ENCODE measurements at regions of chr7 and their contacts with region 1.

Region 1: DNA sequence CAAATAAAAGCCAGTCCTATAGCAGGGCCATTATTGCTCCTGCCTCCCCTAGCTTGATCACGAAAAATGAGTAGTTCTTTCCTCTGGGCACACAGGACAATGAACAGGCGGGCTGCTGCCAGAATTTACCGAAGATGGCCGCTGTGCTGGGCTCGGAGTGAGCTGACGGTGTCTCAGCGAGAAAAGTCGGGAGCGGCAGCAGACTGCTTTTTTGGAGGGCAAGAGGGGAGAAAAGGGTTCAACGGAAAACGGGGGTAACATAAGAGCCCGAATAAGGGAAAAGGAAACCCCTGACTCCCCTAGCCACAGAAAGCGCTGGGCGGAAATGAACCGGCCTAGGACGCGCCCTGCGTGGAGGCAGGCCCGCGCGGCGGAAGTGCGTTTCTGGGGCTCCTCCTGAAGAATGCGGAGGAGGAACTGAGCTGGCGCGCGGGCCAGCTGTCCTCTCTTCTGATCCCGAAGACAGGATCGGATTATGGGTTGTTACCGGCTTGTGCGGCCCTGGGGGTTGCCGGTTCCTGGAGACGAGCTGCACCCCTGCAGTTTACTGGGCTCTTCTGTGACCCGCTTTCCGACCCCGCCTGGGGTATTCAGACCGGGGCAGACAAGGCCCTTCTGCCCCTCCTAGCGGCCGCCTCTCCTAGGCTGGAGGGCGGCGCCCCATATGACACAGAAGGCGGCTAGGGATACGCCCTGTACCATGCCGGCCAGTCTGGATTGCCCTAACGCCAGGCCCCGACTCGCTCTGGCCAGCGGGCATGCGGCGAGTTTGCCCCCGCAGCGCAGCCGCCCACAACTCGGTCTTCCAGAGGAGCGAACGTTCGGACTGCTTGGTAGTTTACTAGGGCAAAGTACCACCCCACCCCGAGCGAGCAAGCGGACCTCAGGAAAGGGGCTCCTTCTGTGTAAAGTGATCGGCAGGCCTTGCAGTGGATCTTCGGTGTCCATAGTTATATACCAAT is 30.1 kb upstream of the KMT2E start:
- DNase-seq: peak; percentile 42
- ATAC-seq: peak; percentile 96
- H3K4me3 ChIP-seq: peak overlapping the region; percentile 75
- H3K27ac ChIP-seq: peak overlapping the region; percentile 98
- H3K4me1 ChIP-seq: peaks cover 14% of the 10 kb centered on the region; the same call in 1 of the 2 replicates
- H3K27me3 ChIP-seq: no peaks in the 10 kb centered on the region
- CTCF ChIP-seq: peak; percentile 36 to 61 (median 50); a peak in 5 of 6 replicates
- EP300 ChIP-seq: 0 out of 4 replicates have a peak, but pooled peaks of 1 of the 2 experiments have one; percentile 24
- POLR2A ChIP-seq: peak; percentile 90
- RAD21 ChIP-seq: peak; percentile 37; the same call in 1 of the 2 replicates

Region 2: DNA sequence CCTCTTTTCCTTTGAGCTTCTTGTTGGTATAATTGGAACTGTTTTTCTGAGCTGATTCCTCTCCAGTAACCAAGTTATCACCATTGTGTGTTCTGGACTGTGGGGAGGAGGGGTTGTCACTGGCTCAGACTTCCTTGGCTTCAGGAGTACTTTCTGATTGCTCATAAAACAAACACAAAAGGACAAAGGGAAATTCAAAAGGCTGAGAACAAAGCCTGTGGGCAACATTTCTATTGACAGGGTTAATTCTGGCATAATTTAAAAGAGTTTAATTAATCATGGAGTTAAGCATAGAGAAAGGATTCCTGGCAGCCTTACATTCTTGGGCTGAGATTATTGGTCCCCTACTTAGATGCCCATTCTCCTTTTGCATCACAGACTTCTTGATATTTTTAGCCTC is 192.8 kb before region 1 on chr7:
- CTCF ChIA-PET with region 1: no interaction called
- POLR2A ChIA-PET with region 1: no interaction called
- RAD21 ChIA-PET with region 1: no interaction called
- SMC1A ChIA-PET with region 1: no interaction called
- in situ Hi-C with region 1: no loop called
- intact Hi-C with region 1: no loop called
- DNase-seq: no peak
- ATAC-seq: no peak
- H3K4me3 ChIP-seq: no peak overlapping the region
- H3K27ac ChIP-seq: no peak overlapping the region
- H3K4me1 ChIP-seq: no peaks in the 10 kb centered on the region
- H3K27me3 ChIP-seq: no peaks in the 10 kb centered on the region; a peak in 2 of 4 replicates
- CTCF ChIP-seq: no peak
- EP300 ChIP-seq: no peak
- POLR2A ChIP-seq: no peak
- RAD21 ChIP-seq: no peak

Region 3: GRCh38 chr7:104923010-104923421 is 60.8 kb before region 1 on chr7:
- CTCF ChIA-PET with region 1: interaction called, 200 read pairs
- POLR2A ChIA-PET with region 1: interaction called, 5 read pairs
- RAD21 ChIA-PET with region 1: interaction called, 147 read pairs
- SMC1A ChIA-PET with region 1: interaction called, 104 read pairs
- in situ Hi-C with region 1: no loop called
- intact Hi-C with region 1: loop called (anchors 1 kb)
- DNase-seq: peak; percentile 71
- ATAC-seq: peak; percentile 99
- H3K4me3 ChIP-seq: no peak overlapping the region
- H3K27ac ChIP-seq: no peak overlapping the region
- H3K4me1 ChIP-seq: peaks cover 6% of the 10 kb centered on the region; the same call in 1 of the 2 replicates
- H3K27me3 ChIP-seq: no peaks in the 10 kb centered on the region
- CTCF ChIP-seq: peak; percentile 86 to 98 (median 89); a peak in 5 of 6 replicates
- EP300 ChIP-seq: no peak
- POLR2A ChIP-seq: no peak
- RAD21 ChIP-seq: peak; percentile 97

Region 4: GRCh38 chr7:104963991-104964385 is 19.9 kb before region 1 on chr7:
- CTCF ChIA-PET with region 1: interaction called, 21 read pairs
- POLR2A ChIA-PET with region 1: interaction called, 4 read pairs
- RAD21 ChIA-PET with region 1: interaction called, 11 read pairs
- SMC1A ChIA-PET with region 1: interaction called, 39 read pairs
- in situ Hi-C with region 1: no loop called
- intact Hi-C with region 1: no loop called
- DNase-seq: no peak
- ATAC-seq: no peak
- H3K4me3 ChIP-seq: no peak overlapping the region
- H3K27ac ChIP-seq: no peak overlapping the region
- H3K4me1 ChIP-seq: peaks cover 10% of the 10 kb centered on the region; the same call in 1 of the 2 replicates
- H3K27me3 ChIP-seq: no peaks in the 10 kb centered on the region
- CTCF ChIP-seq: no peak
- EP300 ChIP-seq: no peak
- POLR2A ChIP-seq: no peak
- RAD21 ChIP-seq: no peak

Region 5: GRCh38 chr7:105036217-105037168 is 52.6 kb after region 1 on chr7:
- CTCF ChIA-PET with region 1: interaction called, 97 read pairs
- POLR2A ChIA-PET with region 1: interaction called, 9 read pairs
- RAD21 ChIA-PET with region 1: interaction called, 42 read pairs
- SMC1A ChIA-PET with region 1: interaction called, 119 read pairs
- in situ Hi-C with region 1: no loop called
- intact Hi-C with region 1: loop called (anchors 1 kb)
- DNase-seq: no peak
- ATAC-seq: peak; percentile 48
- H3K4me3 ChIP-seq: no peak overlapping the region
- H3K27ac ChIP-seq: no peak overlapping the region
- H3K4me1 ChIP-seq: 0 out of 2 replicates have a peak, but pooled peaks cover 4% of the 10 kb centered on the region
- H3K27me3 ChIP-seq: no peaks in the 10 kb centered on the region
- CTCF ChIP-seq: no peak
- EP300 ChIP-seq: no peak
- POLR2A ChIP-seq: no peak
- RAD21 ChIP-seq: no peak

Region 6: DNA sequence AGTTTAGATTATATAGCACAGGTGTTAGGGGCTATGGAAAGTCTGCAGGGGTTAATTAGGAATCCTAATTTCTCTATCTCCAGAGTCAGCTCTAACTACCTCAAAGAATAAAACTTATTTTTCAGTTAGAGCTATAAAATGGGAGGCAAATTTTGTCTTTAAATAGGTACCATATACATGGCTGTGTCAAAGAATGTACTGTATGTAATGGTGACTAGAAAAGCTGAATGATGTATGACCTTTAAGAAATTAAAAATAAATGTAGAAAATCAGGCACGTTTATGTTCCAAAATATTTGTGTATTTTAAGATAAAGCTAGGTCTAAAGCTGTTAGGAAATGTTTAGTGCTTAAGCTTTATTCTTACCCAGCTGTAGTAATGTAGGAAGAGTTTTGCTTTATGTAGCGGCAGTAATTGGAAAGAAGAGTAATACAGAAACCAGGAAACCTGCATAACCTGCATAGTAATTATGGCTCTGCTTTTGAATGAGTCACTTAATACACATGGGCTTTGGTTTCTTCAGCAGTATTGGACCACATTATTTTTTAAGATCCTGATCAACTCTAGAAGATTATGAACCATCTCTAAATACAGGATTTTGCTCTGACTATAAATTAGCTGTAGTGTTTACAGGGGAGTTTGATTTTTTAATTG is 115.1 kb after region 1 on chr7:
- CTCF ChIA-PET with region 1: interaction called, 10 read pairs
- POLR2A ChIA-PET with region 1: interaction called, 3 read pairs
- RAD21 ChIA-PET with region 1: interaction called, 44 read pairs
- SMC1A ChIA-PET with region 1: interaction called, 13 read pairs
- in situ Hi-C with region 1: no loop called
- intact Hi-C with region 1: loop called (anchors 5 kb)
- DNase-seq: no peak
- ATAC-seq: peak; percentile 81
- H3K4me3 ChIP-seq: no peak overlapping the region
- H3K27ac ChIP-seq: no peak overlapping the region
- H3K4me1 ChIP-seq: peaks cover 26% of the 10 kb centered on the region; the same call in 1 of the 2 replicates
- H3K27me3 ChIP-seq: no peaks in the 10 kb centered on the region
- CTCF ChIP-seq: no peak
- EP300 ChIP-seq: 0 out of 4 replicates have a peak, but pooled peaks of 1 of the 2 experiments have one; percentile 34
- POLR2A ChIP-seq: no peak
- RAD21 ChIP-seq: no peak

Region 7: DNA sequence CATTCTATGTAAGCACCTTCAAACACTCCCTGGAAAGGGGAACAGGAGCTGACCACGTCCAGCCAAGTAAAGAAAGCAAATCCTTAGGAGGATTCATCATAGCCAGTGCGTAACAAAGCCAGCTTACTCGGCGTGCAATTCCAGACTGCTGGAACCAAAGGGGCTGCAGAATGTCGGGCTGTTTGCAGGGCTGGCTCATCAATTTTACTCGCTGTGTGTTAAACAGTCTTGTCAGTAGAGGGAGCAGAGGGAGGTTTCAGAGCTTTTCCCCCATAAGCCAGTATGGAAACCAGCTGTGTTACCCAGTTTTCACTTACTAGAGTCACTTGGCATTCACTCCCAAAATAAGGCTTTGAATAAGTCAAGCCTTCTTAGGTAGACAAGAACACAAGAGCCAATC is 157.2 kb after region 1 on chr7:
- CTCF ChIA-PET with region 1: interaction called, 14 read pairs
- POLR2A ChIA-PET with region 1: no interaction called
- RAD21 ChIA-PET with region 1: no interaction called
- SMC1A ChIA-PET with region 1: interaction called, 6 read pairs
- in situ Hi-C with region 1: no loop called
- intact Hi-C with region 1: no loop called
- DNase-seq: no peak
- ATAC-seq: peak; percentile 61; the same call in 2 of the 3 replicates
- H3K4me3 ChIP-seq: no peak overlapping the region
- H3K27ac ChIP-seq: no peak overlapping the region
- H3K4me1 ChIP-seq: no peaks in the 10 kb centered on the region
- H3K27me3 ChIP-seq: no peaks in the 10 kb centered on the region
- CTCF ChIP-seq: peak in 2 of 3 experiments; percentile 20 to 41; a peak in 3 of 6 replicates
- EP300 ChIP-seq: no peak
- POLR2A ChIP-seq: no peak
- RAD21 ChIP-seq: peak; percentile 48

Region 8: GRCh38 chr7:105589356-105590077 is 605.7 kb after region 1 on chr7:
- CTCF ChIA-PET with region 1: interaction called, 16 read pairs
- POLR2A ChIA-PET with region 1: no interaction called
- RAD21 ChIA-PET with region 1: interaction called, 16 read pairs
- SMC1A ChIA-PET with region 1: interaction called, 7 read pairs
- in situ Hi-C with region 1: no loop called
- intact Hi-C with region 1: no loop called
- DNase-seq: peak; percentile 66
- ATAC-seq: peak; percentile 94
- H3K4me3 ChIP-seq: no peak overlapping the region
- H3K27ac ChIP-seq: no peak overlapping the region
- H3K4me1 ChIP-seq: peaks cover 14% of the 10 kb centered on the region
- H3K27me3 ChIP-seq: no peaks in the 10 kb centered on the region
- CTCF ChIP-seq: peak; percentile 66 to 90 (median 73); a peak in 5 of 6 replicates
- EP300 ChIP-seq: no peak
- POLR2A ChIP-seq: no peak
- RAD21 ChIP-seq: peak; percentile 83